ENCODE measurements at regions of chr19 and their contacts with region 1.

Region 1: GRCh38 chr19:41206926-41207750 is 11.9 kb upstream of the AXL start:
- DNase-seq: no peak

Region 2: GRCh38 chr19:41189425-41190065 is 17.6 kb before region 1 on chr19:
- intact Hi-C with region 1: no loop called
- DNase-seq: no peak

Region 3: DNA sequence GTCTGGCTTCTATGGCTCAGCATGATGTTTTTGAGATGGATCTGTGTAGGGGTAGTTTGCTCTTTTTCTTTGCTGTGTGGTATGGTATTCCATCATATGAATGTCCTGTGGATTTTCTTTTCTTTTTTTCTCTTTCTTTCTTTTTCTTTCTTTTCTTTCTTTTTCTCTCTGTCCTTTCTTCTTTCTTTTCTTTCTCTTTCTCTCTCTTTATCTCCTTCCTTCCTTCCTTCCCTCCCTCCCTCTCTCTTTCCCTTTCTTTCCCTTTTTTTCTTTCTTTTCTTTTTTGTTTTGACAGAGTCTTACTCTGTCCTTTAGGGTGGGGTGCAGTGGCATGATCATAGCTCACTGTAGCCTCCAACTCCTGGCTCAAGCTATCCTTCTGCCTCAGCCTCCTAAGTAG is 48.0 kb after region 1 on chr19:
- intact Hi-C with region 1: loop called (anchors 5 kb)
- DNase-seq: no peak

Region 4: GRCh38 chr19:41377977-41378709 is 171.0 kb after region 1 on chr19:
- intact Hi-C with region 1: no loop called
- DNase-seq: no peak

Measured in head of caudate nucleus (tissue), 42 donors.